ENCODE measurements at regions of chr1 and their contacts with region 1.

Region 1: DNA sequence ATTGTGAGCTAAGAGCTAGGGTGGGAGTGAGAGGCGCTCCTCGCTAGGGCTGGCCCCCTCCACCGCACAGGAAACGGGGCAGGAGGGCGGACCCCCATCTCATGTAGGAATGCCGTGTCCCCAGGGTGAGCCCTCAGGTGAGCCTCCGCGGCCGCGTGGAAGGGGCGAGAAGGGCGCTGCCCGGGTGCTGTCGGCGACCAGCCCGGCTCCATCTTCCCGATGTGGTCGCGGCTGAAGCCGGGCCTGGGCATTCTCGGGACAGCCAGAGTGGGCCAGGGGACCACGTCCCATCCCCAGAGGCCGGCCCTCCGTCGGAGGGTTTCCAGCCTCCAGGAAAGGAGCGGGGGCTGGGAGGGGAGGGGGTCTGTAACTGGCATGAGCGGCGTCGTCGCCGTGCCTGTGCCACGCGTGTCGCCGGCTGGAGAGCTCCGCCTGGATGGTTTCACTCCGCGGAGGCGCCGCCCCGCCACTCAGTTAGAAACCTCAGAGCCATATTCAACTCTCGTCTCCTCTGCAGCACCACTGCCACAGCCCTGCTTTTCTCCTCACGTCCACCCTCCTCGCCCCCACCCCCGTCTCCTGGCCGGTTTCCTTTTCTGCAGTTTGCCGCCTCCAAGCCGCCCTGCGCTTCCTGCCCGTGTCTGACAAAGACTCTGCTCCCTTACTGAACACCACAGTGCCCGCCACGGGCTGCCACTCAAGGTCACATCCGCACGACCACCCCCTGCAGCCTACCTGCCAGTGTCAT is at the start of gene TMEM269:
- DNase-seq: peak; percentile 72
- CTCF ChIP-seq: no peak

Region 2: GRCh38 chr1:42913426-42914091 is 128.4 kb after region 1 on chr1:
- in situ Hi-C with region 1: loop called (anchors 10 kb)
- DNase-seq: peak; percentile 58
- CTCF ChIP-seq: peak; percentile 31

Region 3: GRCh38 chr1:43073490-43074230 is 288.5 kb after region 1 on chr1:
- in situ Hi-C with region 1: loop called (anchors 10 kb)
- DNase-seq: peak; percentile 80
- CTCF ChIP-seq: peak; percentile 73

Measured in GM13976 (cell line).